ENCODE measurements at regions of chr5 and their contacts with region 1.

Region 1: GRCh38 chr5:173972925-173973615 is 15.9 kb upstream of the C5orf47 start:
- DNase-seq: no peak
- H3K4me3 ChIP-seq: peak overlapping the region; percentile 48
- CTCF ChIP-seq: peak; percentile 87

Region 2: GRCh38 chr5:173035904-173036707 is 937.0 kb before region 1 on chr5:
- CTCF ChIA-PET with region 1: no interaction called
- POLR2A ChIA-PET with region 1: no interaction called
- DNase-seq: no peak
- H3K4me3 ChIP-seq: no peak overlapping the region
- CTCF ChIP-seq: no peak

Region 3: DNA sequence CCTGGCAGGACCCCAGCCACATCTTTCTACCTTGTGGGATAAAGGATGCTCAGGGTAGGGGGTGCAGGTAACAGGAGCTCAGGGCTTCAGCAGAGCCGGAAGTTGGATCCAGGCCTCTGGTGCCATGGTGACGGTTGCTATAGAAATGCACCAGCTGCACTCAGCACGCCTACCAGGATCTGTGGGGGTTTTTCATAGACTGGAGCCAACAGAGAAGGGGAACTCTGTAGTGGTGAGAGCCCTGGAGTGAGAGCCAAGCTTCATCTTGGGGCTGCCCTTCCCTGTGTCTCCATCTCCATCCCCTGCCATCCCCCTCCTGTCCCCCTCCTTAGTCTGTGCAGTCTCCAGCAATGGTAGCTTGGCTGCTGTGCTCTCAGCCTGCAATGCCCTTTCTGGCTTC is 329.1 kb before region 1 on chr5:
- CTCF ChIA-PET with region 1: interaction called, 16 read pairs
- POLR2A ChIA-PET with region 1: no interaction called
- DNase-seq: no peak
- H3K4me3 ChIP-seq: no peak overlapping the region
- CTCF ChIP-seq: no peak

Region 4: GRCh38 chr5:173707392-173707791 is 265.7 kb before region 1 on chr5:
- CTCF ChIA-PET with region 1: no interaction called
- POLR2A ChIA-PET with region 1: no interaction called
- DNase-seq: peak; percentile 28
- H3K4me3 ChIP-seq: no peak overlapping the region
- CTCF ChIP-seq: no peak

Region 5: DNA sequence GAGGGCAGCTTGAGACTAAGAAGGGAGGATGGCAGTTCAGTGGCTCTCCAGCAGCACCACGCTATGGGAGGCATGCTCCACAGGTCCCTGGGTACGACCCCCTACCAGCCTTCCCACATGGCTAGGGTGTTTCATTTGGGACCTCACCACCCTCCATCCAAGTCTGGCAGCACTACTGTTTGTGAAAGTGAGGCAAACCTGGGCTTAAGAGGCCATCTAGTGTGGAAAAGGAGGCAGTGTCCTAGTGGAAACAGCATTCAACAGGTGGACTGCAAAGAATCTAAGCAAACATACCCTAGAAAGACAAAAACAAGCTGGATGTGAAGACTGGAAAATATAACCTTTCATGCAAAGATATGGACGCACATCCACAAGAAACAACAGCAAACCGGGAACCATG is 11.1 kb after region 1 on chr5:
- CTCF ChIA-PET with region 1: interaction called, 14 read pairs
- POLR2A ChIA-PET with region 1: no interaction called
- DNase-seq: no peak
- H3K4me3 ChIP-seq: no peak overlapping the region
- CTCF ChIP-seq: peak; percentile 36

Region 6: GRCh38 chr5:174311531-174312269 is 338.6 kb after region 1 on chr5:
- CTCF ChIA-PET with region 1: interaction called, 53 read pairs
- POLR2A ChIA-PET with region 1: no interaction called
- DNase-seq: no peak
- H3K4me3 ChIP-seq: peak overlapping the region; percentile 49
- CTCF ChIP-seq: peak; percentile 90

Region 7: DNA sequence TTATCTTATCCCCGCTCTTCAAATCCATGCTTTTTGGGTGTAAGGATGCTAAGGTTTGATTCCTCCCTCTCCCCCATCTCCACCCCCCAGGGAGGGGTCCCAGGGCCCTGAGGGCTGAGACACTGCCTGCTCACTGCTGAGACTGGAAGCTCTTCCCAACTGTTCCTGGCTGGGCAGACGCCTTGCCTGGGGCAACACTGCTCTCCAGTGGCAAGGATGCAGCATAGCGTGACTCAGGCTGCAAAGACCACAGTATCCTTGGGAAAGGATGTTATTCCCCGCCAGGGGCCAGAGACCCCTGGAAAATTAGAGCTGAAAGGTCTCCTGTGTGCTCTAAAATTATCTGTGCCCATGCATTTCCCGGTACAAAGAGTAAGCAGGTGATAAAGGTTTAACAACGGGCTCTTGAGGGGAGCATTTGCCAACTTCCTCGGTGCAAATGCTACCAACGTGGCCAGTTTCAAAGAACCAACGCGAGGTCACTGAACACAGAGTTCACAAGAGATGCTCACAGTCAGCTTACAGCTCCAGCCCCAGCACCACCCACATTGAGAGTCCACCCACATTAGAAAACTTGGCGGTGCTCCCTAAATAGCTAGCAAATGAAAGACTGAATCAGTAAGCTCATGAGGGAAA is 344.3 kb after region 1 on chr5:
- CTCF ChIA-PET with region 1: interaction called, 53 read pairs
- POLR2A ChIA-PET with region 1: no interaction called
- DNase-seq: no peak
- H3K4me3 ChIP-seq: no peak overlapping the region
- CTCF ChIP-seq: peak; percentile 93

Measured in AG04449 (cell line).